Activated T-helper 2 cell treated with anti-CD3 and anti-CD28 coated beads, Interferon-gamma antibody, Interleukin-2, Interleukin-4, amounts not matched to agents 10 μg/mL and 5 μg/mL and 100 μg/mL, durations not matched to agents 14 hours and 24 hours and 36 hours (primary cell): ENCODE measurements at regions of chr7 and their contacts with region 1.

Region 1: DNA sequence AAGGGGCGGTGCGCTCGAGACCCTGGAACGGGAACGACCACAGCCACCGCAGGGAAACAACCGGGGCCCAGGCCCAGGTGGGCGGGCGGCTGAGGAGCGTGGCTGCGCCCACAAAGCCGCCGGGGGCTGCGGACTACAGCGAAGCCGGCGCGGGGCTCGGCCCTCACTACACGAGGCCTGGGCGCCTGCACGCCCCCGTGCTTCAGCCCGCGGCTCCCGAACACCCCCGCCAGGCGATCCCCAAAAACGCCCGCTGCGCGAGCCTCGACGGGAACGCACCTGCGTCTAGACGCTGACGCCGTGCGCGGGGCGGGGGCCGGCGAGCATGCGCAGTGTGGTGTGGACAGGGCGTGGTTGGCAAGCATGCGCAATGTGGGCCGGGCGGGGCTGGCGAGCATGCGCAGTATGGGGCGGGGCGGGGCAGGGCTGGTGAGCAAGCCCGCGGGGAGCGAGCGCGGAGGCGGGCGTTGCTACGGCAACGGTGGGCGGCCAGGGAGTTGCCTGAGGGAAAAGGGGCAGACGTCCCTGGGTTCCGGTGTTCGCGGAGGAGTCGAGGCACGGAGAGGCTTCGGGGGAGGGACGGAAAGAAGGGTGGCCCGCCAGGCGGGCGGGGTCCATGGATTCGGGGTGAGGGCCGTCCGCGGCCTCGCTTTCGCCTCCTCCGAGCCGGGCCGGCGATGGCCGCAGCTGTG is at the start of gene RNF32:
- DNase-seq: peak; percentile 95
- H3K4me3 Mint-ChIP-seq: peak within 1 kb of the TSS; percentile 97
- H3K27ac Mint-ChIP-seq: peak within 1 kb of the TSS; percentile 100
- H3K4me1 Mint-ChIP-seq: peaks cover 36% of the 10 kb centered on the region
- H3K27me3 Mint-ChIP-seq: no peaks in the 10 kb centered on the region
- total RNA-seq, gene RNF32: 2.9 and 3.4 TPM in 2 replicates

Region 2: DNA sequence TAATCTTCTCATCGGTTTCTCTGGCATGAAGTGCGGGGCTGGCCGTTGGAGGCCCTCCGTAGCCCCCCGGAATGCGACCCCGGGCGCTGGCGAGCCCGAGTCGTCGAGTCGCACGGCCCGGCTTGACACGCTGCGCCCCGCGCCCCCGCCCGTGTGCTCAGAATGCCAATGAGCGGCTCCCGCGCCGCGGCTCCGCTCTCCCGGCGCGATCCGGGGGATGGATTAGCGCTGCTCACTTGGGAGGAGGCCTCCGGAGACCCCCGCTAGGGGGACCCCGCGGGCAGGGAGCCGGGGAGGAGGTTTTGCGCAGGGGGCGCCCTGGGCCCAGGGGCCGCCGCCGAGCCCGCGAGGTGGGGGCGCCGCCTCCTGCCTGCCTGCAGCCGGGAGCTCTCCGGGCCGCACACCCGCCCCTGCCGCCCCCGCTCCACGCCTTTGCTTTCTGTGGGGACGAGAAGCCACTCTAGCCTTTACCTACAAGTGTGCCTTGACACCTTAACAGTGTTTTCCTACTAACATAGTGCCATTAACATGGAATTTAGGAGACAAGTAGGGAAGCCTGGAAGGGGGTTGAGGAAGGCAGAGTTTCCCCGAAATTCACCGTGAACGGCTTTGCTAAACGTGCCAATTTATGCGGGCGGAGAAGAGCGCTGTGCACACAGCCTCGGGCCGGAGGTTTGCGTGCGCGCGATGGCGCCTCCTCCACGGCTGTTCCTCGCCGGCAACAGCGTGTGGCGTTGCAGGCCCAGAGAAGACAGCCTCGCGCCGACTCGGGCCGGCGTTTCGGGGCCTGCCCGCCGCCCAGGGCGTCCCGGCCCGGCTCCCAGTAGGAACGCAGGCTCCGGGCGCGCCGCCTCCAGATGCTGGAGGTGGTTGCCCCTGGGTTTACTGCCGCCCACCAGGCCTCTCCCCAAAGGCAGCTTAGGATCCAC is 835.2 kb before region 1 on chr7:
- intact Hi-C with region 1: loop called (anchors 2 kb)
- DNase-seq: peak; percentile 51
- H3K4me3 Mint-ChIP-seq: peak overlapping the region; percentile 42
- H3K27ac Mint-ChIP-seq: no peak overlapping the region
- H3K4me1 Mint-ChIP-seq: peaks cover 17% of the 10 kb centered on the region
- H3K27me3 Mint-ChIP-seq: peaks cover 59% of the 10 kb centered on the region

Region 3: GRCh38 chr7:156612930-156613329 is 27.5 kb before region 1 on chr7:
- intact Hi-C with region 1: loop called (anchors 1 kb)
- DNase-seq: peak; percentile 86
- H3K4me3 Mint-ChIP-seq: peak overlapping the region; percentile 63
- H3K27ac Mint-ChIP-seq: peak overlapping the region; percentile 73
- H3K4me1 Mint-ChIP-seq: peaks cover 51% of the 10 kb centered on the region
- H3K27me3 Mint-ChIP-seq: peaks cover 38% of the 10 kb centered on the region

Region 4: DNA sequence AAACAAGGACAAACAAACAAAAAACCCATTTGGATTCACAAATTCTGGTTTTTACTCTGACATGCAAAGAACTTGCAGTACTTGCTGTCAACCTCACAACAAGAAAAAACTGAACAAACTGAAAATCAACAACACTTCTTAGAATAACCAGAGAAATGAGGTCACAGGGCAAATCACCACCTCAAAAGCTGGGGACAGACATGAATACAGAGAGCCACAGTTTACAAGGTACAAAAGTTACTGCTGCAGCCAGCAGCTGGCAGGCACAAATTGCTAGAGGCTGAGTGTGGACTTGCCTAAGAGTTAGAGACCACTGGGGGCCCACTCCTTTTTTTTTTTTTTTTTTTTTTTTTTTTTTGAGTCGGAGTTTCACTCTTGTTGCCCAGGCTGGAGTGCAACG is 14.8 kb before region 1 on chr7:
- intact Hi-C with region 1: loop called (anchors 1 kb)
- DNase-seq: no peak
- H3K4me3 Mint-ChIP-seq: no peak overlapping the region
- H3K27ac Mint-ChIP-seq: peak overlapping the region; percentile 64
- H3K4me1 Mint-ChIP-seq: peaks cover 12% of the 10 kb centered on the region
- H3K27me3 Mint-ChIP-seq: peaks cover 19% of the 10 kb centered on the region

Region 5: GRCh38 chr7:156703209-156703608 is 62.8 kb after region 1 on chr7:
- intact Hi-C with region 1: no loop called
- DNase-seq: no peak
- H3K4me3 Mint-ChIP-seq: no peak overlapping the region
- H3K27ac Mint-ChIP-seq: no peak overlapping the region
- H3K4me1 Mint-ChIP-seq: peaks cover 15% of the 10 kb centered on the region
- H3K27me3 Mint-ChIP-seq: no peaks in the 10 kb centered on the region

Region 6: GRCh38 chr7:156751319-156751718 is 110.9 kb after region 1 on chr7:
- intact Hi-C with region 1: loop called (anchors 1 kb)
- DNase-seq: peak; percentile 62
- H3K4me3 Mint-ChIP-seq: peak overlapping the region; percentile 24
- H3K27ac Mint-ChIP-seq: no peak overlapping the region
- H3K4me1 Mint-ChIP-seq: peaks cover 27% of the 10 kb centered on the region
- H3K27me3 Mint-ChIP-seq: no peaks in the 10 kb centered on the region

Region 7: DNA sequence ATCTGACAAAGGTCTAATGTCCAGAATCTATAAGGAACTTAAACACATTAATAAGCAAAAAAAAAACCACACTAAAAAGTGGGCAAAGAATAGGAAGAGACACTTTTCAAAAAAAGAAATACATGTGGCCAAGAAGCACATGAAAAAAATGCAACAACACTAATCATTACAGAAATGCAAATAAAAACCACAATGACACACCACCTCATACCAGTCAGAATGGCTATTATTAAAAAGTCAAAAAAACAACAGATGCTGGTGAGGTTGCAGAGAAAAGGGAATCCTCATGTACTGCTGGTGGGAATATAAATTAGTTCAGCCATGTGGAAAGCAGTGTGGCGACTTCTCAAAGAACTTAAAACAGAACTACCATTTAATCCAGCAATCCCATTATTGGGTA is 133.6 kb after region 1 on chr7:
- intact Hi-C with region 1: loop called (anchors 1 kb)
- DNase-seq: no peak
- H3K4me3 Mint-ChIP-seq: no peak overlapping the region
- H3K27ac Mint-ChIP-seq: peak overlapping the region; percentile 73
- H3K4me1 Mint-ChIP-seq: peaks cover 61% of the 10 kb centered on the region
- H3K27me3 Mint-ChIP-seq: no peaks in the 10 kb centered on the region